PC-9 (cell line): ENCODE measurements at regions of chr6 and their contacts with region 1.

Region 1: GRCh38 chr6:87701676-87702588 is at the start of gene AKIRIN2:
- DNase-seq: peak; percentile 91 to 96
- H3K4me3 ChIP-seq: peak within 1 kb of the TSS; percentile 96
- H3K27ac ChIP-seq: peak within 1 kb of the TSS; percentile 86
- H3K4me1 ChIP-seq: peaks cover 30% of the 10 kb centered on the region
- H3K27me3 ChIP-seq: no peaks in the 10 kb centered on the region
- CTCF ChIP-seq: no peak
- total RNA-seq, gene AKIRIN2: 34.7 and 48.3 TPM in 2 replicates

Region 2: GRCh38 chr6:87407901-87408720 is 293.8 kb before region 1 on chr6 and contains the start of gene CFAP206:
- CTCF ChIA-PET with region 1: no interaction called
- POLR2A ChIA-PET with region 1: no interaction called
- intact Hi-C with region 1: loop called (anchors 5 kb)
- DNase-seq: peak; percentile 67 to 79
- H3K4me3 ChIP-seq: peak within 1 kb of the TSS; percentile 94
- H3K27ac ChIP-seq: peak within 1 kb of the TSS; percentile 34; the same call in 1 of the 2 replicates
- H3K4me1 ChIP-seq: 0 out of 2 replicates have a peak, but pooled peaks cover 6% of the 10 kb centered on the region
- H3K27me3 ChIP-seq: no peaks in the 10 kb centered on the region
- CTCF ChIP-seq: no peak
- total RNA-seq, gene CFAP206: 2.9 and 3.2 TPM in 2 replicates

Region 3: DNA sequence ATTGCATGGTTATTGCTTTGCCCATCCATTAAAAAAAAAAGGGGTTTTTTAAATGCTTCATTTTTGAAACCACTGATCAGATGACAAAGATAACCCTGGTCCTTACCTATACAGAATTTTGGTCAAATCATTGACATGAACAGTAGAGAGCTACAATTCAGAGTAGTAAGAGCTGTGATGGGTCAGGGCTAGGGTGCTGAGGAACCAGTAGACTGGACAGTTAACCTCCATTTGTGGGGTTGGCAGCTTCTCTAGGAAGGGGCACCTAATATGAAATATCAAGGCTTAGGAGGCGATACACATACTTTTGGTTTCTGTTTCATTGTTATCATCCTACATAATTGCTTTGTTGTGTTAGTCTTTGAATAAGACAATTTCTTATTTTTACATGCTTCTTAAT is 56.9 kb before region 1 on chr6:
- CTCF ChIA-PET with region 1: no interaction called
- POLR2A ChIA-PET with region 1: interaction called, 16 read pairs
- intact Hi-C with region 1: no loop called
- DNase-seq: no peak
- H3K4me3 ChIP-seq: no peak overlapping the region
- H3K27ac ChIP-seq: no peak overlapping the region
- H3K4me1 ChIP-seq: no peaks in the 10 kb centered on the region
- H3K27me3 ChIP-seq: no peaks in the 10 kb centered on the region
- CTCF ChIP-seq: no peak

Region 4: GRCh38 chr6:87731818-87732661 is 30.1 kb after region 1 on chr6:
- CTCF ChIA-PET with region 1: no interaction called
- POLR2A ChIA-PET with region 1: interaction called, 12 read pairs
- intact Hi-C with region 1: loop called (anchors 1 kb)
- DNase-seq: peak; percentile 90 to 94
- H3K4me3 ChIP-seq: peak overlapping the region; percentile 42; the same call in 1 of the 2 replicates
- H3K27ac ChIP-seq: peak overlapping the region; percentile 82
- H3K4me1 ChIP-seq: peaks cover 31% of the 10 kb centered on the region
- H3K27me3 ChIP-seq: no peaks in the 10 kb centered on the region
- CTCF ChIP-seq: no peak

Region 5: GRCh38 chr6:87832025-87832825 is 130.3 kb after region 1 on chr6:
- CTCF ChIA-PET with region 1: no interaction called
- POLR2A ChIA-PET with region 1: no interaction called
- intact Hi-C with region 1: loop called (anchors 2 kb)
- DNase-seq: no peak
- H3K4me3 ChIP-seq: peak overlapping the region; percentile 56
- H3K27ac ChIP-seq: no peak overlapping the region
- H3K4me1 ChIP-seq: no peaks in the 10 kb centered on the region
- H3K27me3 ChIP-seq: no peaks in the 10 kb centered on the region
- CTCF ChIP-seq: peak; percentile 52; the same call in 1 of the 2 replicates

Region 6: GRCh38 chr6:89297695-89298351 is 1595.9 kb after region 1 on chr6:
- CTCF ChIA-PET with region 1: no interaction called
- POLR2A ChIA-PET with region 1: no interaction called
- intact Hi-C with region 1: loop called (anchors 5 kb)
- DNase-seq: peak; percentile 87 to 96
- H3K4me3 ChIP-seq: peak overlapping the region; percentile 37; the same call in 1 of the 2 replicates
- H3K27ac ChIP-seq: peak overlapping the region; percentile 100
- H3K4me1 ChIP-seq: peaks cover 36% of the 10 kb centered on the region
- H3K27me3 ChIP-seq: no peaks in the 10 kb centered on the region
- CTCF ChIP-seq: no peak